ENCODE measurements at regions of chr3 and their contacts with region 1.

Region 1: GRCh38 chr3:192816351-192816750 is 89.0 kb upstream of the FGF12 start:
- DNase-seq: no peak
- H3K4me3 ChIP-seq: no peak overlapping the region
- H3K27ac ChIP-seq: no peak overlapping the region
- H3K4me1 ChIP-seq: peaks cover 0 to 11% of the 10 kb centered on the region in 2 donors
- H3K27me3 ChIP-seq: no peaks in the 10 kb centered on the region
- CTCF ChIP-seq: peak; percentile 66 to 80 (median 72)
- POLR2A ChIP-seq: no peak

Region 2: GRCh38 chr3:192706272-192706671 is 110.1 kb before region 1 on chr3:
- intact Hi-C with region 1: no loop called
- DNase-seq: no peak
- H3K4me3 ChIP-seq: no peak overlapping the region
- H3K27ac ChIP-seq: no peak overlapping the region
- H3K4me1 ChIP-seq: no peaks in the 10 kb centered on the region
- H3K27me3 ChIP-seq: no peaks in the 10 kb centered on the region
- CTCF ChIP-seq: no peak
- POLR2A ChIP-seq: no peak

Region 3: DNA sequence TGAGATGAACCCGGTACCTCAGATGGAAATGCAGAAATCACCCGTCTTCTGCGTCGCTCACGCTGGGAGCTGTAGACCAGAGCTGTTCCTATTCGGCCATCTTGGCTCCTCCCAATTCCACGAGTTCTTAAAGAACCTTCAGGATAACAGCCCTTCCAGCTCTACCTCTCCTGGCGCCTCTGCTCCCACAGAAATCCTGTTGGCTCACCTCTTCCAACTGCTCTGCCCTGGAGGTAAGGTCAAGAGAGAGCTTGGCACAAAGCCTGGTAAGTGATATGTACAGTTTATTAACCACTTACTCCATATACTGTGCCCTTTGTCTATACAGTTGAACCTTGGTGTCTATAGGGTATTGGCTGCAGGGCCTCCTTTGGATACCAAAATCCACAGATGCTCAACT is 71.2 kb before region 1 on chr3:
- intact Hi-C with region 1: no loop called
- DNase-seq: no peak
- H3K4me3 ChIP-seq: no peak overlapping the region
- H3K27ac ChIP-seq: no peak overlapping the region
- H3K4me1 ChIP-seq: no peaks in the 10 kb centered on the region
- H3K27me3 ChIP-seq: no peaks in the 10 kb centered on the region
- CTCF ChIP-seq: no peak
- POLR2A ChIP-seq: no peak

Region 4: GRCh38 chr3:193040836-193041672 is 224.7 kb after region 1 on chr3:
- intact Hi-C with region 1: loop called (anchors 5 kb)
- DNase-seq: no peak
- H3K4me3 ChIP-seq: no peak overlapping the region
- H3K27ac ChIP-seq: no peak overlapping the region
- H3K4me1 ChIP-seq: no peaks in the 10 kb centered on the region
- H3K27me3 ChIP-seq: no peaks in the 10 kb centered on the region
- CTCF ChIP-seq: peak; percentile 40 to 53 (median 47)
- POLR2A ChIP-seq: no peak